HepG2 (cell line): ENCODE measurements at regions of chr9 and their contacts with region 1.

Region 1: DNA sequence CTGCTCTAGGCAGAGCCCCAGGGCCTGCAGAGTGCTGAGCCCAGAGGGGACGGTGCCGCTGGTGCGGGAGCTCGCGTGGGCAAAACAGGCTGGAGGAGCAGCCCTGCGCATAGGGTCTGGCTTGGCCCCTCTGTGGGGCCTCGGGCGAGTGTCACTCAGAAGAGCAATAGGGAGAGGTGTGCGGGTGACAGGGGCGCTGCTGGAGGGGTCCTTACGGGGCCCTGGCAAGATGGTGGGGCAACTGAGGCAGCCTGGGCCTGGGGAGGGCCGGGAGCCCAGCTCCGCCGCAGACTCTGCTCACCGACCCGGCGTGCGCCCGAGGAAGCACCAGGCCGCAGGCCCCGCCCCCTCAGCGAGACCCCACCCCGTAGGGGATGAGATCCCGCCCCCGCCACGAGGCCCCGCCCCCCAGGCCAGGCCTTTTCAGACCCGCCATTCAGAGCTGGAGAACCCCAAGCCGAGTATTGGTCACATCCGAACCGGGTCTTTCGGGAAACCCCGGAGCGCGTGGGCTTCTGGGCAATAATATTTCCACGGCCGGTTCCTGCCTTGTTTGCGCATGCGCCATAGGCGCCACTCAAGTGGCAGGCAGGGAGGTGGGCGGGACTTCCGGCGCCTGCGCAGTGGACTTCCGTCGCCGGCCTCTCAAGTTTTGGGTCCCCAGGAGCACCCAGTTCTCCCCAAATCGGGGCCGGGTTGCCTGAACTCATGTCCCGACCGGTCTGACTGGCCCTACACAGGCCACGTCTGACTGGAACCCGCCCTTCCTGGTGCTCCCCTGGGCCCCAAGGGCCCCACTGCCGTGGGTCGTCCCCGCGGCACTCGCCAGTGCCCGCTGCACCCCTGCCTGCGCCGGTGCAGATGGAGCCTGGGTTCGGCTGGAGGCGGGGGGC is 1.3 kb upstream of the RNF208 start:
- DNase-seq: peak; percentile 98
- ATAC-seq: peak; percentile 44
- H3K4me3 ChIP-seq: peak overlapping the region; percentile 84 to 99 (median 92)
- H3K27ac ChIP-seq: peak overlapping the region; percentile 76
- H3K4me1 ChIP-seq: peaks cover 64% of the 10 kb centered on the region
- H3K27me3 ChIP-seq: no peaks in the 10 kb centered on the region; a peak in 1 of 5 replicates
- CTCF ChIP-seq: no peak
- EP300 ChIP-seq: no peak
- POLR2A ChIP-seq: peak in 1 of 2 experiments; percentile 30; a peak in 1 of 4 replicates
- RAD21 ChIP-seq: peak; percentile 30; the same call in 1 of the 2 replicates

Region 2: GRCh38 chr9:137086531-137087408 is 136.6 kb before region 1 on chr9 and contains the start of gene MAN1B1:
- CTCF ChIA-PET with region 1: no interaction called
- POLR2A ChIA-PET with region 1: interaction called, 13 read pairs
- in situ Hi-C with region 1: no loop called
- intact Hi-C with region 1: no loop called
- DNase-seq: peak; percentile 97
- ATAC-seq: peak; percentile 87
- H3K4me3 ChIP-seq: peak within 1 kb of the TSS; percentile 77 to 89 (median 79)
- H3K27ac ChIP-seq: peak within 1 kb of the TSS; percentile 83
- H3K4me1 ChIP-seq: peaks cover 59% of the 10 kb centered on the region
- H3K27me3 ChIP-seq: no peaks in the 10 kb centered on the region; a peak in 1 of 5 replicates
- CTCF ChIP-seq: peak; percentile 45
- EP300 ChIP-seq: no peak
- POLR2A ChIP-seq: peak in 1 of 2 experiments; percentile 65; a peak in 2 of 4 replicates
- RAD21 ChIP-seq: peak; percentile 53; the same call in 1 of the 2 replicates
- total RNA-seq, gene MAN1B1: 19.0 and 48.9 TPM in 2 replicates

Region 3: DNA sequence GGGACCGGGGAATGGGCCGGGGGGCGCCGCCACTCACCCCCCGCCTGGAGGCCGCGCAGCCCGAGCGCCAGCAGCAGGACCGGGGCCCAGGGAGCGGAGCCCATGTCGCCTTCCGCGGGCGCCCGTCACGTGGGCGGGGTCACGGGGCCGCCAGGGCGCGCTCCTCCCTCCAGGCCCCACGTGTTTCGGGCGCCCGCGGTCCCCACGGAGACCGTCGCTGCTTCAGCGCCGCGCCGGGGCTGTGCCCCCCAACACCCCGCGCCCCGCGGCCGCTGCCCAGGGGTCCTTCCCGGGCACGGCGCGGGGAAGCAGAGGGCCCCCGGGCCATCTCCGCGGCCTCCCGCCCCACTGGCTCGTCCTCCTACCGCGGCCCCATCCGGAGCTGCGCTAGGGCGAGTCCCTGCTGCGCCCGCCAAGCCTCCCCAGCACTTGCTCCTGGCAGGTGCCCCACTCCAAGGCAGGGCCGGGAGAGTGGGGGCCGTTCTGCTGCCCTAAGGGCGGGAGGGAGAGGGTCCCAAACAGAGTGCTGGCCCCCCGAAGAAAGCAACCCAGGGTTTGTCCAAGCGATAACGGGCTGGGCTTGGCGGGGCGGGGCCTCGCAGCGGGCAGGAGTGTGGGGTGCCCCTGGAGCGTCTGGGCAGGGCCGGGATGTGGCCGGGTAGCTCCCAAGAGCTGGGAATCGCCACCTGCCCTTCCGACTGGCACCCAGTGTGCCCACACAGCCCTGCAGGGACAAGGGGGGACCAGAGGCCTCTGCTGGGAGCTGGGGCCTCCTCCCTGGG is 108.5 kb before region 1 on chr9 and contains the start of gene DPP7:
- CTCF ChIA-PET with region 1: no interaction called
- POLR2A ChIA-PET with region 1: interaction called, 4 read pairs
- in situ Hi-C with region 1: loop called (anchors 5 kb)
- intact Hi-C with region 1: no loop called
- DNase-seq: no peak
- ATAC-seq: no peak
- H3K4me3 ChIP-seq: no peak within 1 kb of the TSS; a peak in 1 of 6 replicates
- H3K27ac ChIP-seq: no peak within 1 kb of the TSS
- H3K4me1 ChIP-seq: peaks cover 64% of the 10 kb centered on the region
- H3K27me3 ChIP-seq: no peaks in the 10 kb centered on the region
- CTCF ChIP-seq: no peak
- EP300 ChIP-seq: no peak
- POLR2A ChIP-seq: no peak
- RAD21 ChIP-seq: no peak
- total RNA-seq, gene DPP7: 0.66 and 1.2 TPM in 2 replicates

Region 4: GRCh38 chr9:137150617-137151457 is 72.5 kb before region 1 on chr9:
- CTCF ChIA-PET with region 1: no interaction called
- POLR2A ChIA-PET with region 1: interaction called, 23 read pairs
- in situ Hi-C with region 1: no loop called
- intact Hi-C with region 1: no loop called
- DNase-seq: peak; percentile 84
- ATAC-seq: peak; percentile 19
- H3K4me3 ChIP-seq: no peak overlapping the region
- H3K27ac ChIP-seq: no peak overlapping the region
- H3K4me1 ChIP-seq: peaks cover 30% of the 10 kb centered on the region
- H3K27me3 ChIP-seq: peaks cover 8 to 38% of the 10 kb centered on the region in 2 experiments; a peak in 4 of 5 replicates
- CTCF ChIP-seq: no peak
- EP300 ChIP-seq: no peak
- POLR2A ChIP-seq: no peak
- RAD21 ChIP-seq: no peak

Region 5: DNA sequence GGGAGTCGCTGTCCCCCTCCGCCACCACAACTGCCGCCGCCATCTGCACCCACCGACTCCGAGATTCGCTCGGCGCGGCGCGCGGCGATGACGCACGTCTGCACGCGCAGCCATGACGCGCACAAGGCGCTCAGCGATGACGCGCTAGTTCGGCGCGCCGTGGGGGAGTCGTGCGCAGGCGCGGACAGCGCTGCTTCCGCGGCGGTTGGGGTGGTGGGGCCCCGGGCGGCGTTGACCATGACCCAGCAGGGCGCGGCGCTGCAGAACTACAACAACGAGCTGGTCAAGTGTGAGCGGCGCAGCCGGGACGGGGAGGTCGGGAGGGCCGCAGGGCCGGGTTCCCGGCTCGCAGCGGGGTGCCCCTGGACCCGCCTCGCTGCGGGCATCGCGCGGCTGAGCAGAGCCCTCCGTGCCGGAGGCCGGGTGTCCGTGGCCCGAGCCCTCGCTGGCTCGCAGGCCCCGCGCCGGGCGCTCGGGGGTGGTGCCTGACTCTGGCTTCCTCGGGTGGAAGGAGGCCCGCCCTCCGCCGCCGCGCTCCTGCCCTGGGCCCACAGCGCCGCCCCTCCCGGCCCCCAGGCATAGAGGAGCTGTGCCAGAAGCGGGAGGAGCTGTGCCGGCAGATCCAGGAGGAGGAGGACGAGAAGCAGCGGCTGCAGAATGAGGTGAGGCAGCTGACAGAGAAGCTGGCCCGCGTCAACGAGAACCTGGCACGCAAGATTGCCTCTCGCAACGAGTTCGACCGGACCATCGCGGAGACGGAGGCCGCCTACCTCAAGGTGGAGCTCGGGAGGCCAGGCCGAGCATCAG is 34.6 kb before region 1 on chr9 and contains the starts of genes ANAPC2 and SSNA1:
- CTCF ChIA-PET with region 1: interaction called, 16 read pairs
- POLR2A ChIA-PET with region 1: interaction called, 38 read pairs
- in situ Hi-C with region 1: loop called (anchors 5 kb)
- intact Hi-C with region 1: loop called (anchors 2 kb)
- DNase-seq: peak; percentile 85
- ATAC-seq: peak; percentile 84
- H3K4me3 ChIP-seq: peak within 1 kb of the TSS; percentile 84 to 99 (median 97)
- H3K27ac ChIP-seq: peak within 1 kb of the TSS; percentile 81
- H3K4me1 ChIP-seq: peaks cover 28% of the 10 kb centered on the region
- H3K27me3 ChIP-seq: no peaks in the 10 kb centered on the region
- CTCF ChIP-seq: peak; percentile 88
- EP300 ChIP-seq: peak in 1 of 2 experiments; percentile 18; a peak in 1 of 4 replicates
- POLR2A ChIP-seq: peak in 1 of 2 experiments; percentile 41; a peak in 1 of 4 replicates
- RAD21 ChIP-seq: peak; percentile 92
- total RNA-seq, gene ANAPC2: 7.4 and 12.3 TPM in 2 replicates
- total RNA-seq, gene SSNA1: 41.2 and 49.4 TPM in 2 replicates